ENCODE measurements at regions of chr7 and their contacts with region 1.

Region 1: GRCh38 chr7:100538654-100539435 is at the start of gene AGFG2:
- DNase-seq: peak; percentile 100
- H3K4me3 Mint-ChIP-seq: peak within 1 kb of the TSS; percentile 81
- H3K27ac Mint-ChIP-seq: peak within 1 kb of the TSS; percentile 36
- H3K4me1 Mint-ChIP-seq: peaks cover 28% of the 10 kb centered on the region
- H3K27me3 Mint-ChIP-seq: no peaks in the 10 kb centered on the region
- CTCF ChIP-seq: no peak
- total RNA-seq, gene AGFG2: 8.4 and 11.9 TPM in 2 replicates

Region 2: DNA sequence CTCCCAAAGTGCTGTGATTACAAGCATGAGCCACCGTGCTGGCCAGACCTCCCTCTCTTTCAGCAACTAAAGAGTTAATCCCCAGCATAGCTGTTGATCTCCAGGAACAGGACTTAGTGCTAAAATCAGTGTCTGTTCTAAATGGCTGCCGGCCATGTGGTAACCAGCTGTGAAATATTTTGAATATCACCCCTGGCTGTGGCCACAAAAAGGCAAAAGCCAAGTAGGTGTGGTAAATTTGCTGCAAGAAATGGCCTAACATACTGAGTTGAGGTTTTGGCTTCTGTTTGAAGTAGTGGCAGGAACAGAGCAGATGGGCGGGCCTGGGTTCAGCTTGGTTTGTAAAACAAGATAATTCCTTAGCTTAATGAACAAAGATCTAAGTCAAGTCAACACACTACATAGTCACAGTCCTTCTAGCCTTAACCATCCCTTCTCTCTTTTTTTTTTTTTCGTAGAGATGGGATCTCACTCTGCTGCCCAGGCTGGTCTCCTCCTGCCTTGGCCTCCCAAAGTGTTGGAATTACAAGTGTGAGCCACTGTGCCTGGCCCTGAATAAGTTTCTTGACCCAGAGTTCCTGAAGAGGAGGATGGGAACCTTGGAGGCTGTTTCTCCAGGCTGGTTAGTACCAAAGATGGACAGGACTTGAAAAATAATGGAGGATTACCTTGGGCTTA is 22.6 kb before region 1 on chr7:
- CTCF ChIA-PET with region 1: interaction called, 3 read pairs
- POLR2A ChIA-PET with region 1: interaction called, 14 read pairs
- intact Hi-C with region 1: no loop called
- DNase-seq: peak; percentile 84
- H3K4me3 Mint-ChIP-seq: peak overlapping the region; percentile 45
- H3K27ac Mint-ChIP-seq: peak overlapping the region; percentile 77
- H3K4me1 Mint-ChIP-seq: peaks cover 15% of the 10 kb centered on the region
- H3K27me3 Mint-ChIP-seq: no peaks in the 10 kb centered on the region
- CTCF ChIP-seq: no peak

Region 3: GRCh38 chr7:100612730-100613390 is 74.0 kb after region 1 on chr7:
- CTCF ChIA-PET with region 1: no interaction called
- POLR2A ChIA-PET with region 1: no interaction called
- intact Hi-C with region 1: no loop called
- DNase-seq: no peak
- H3K4me3 Mint-ChIP-seq: peak overlapping the region; percentile 92
- H3K27ac Mint-ChIP-seq: peak overlapping the region; percentile 99
- H3K4me1 Mint-ChIP-seq: peaks cover 6% of the 10 kb centered on the region
- H3K27me3 Mint-ChIP-seq: no peaks in the 10 kb centered on the region
- CTCF ChIP-seq: no peak

Region 4: GRCh38 chr7:100753750-100754149 is 214.9 kb after region 1 on chr7:
- CTCF ChIA-PET with region 1: no interaction called
- POLR2A ChIA-PET with region 1: no interaction called
- intact Hi-C with region 1: no loop called
- DNase-seq: peak; percentile 38
- H3K4me3 Mint-ChIP-seq: no peak overlapping the region
- H3K27ac Mint-ChIP-seq: no peak overlapping the region
- H3K4me1 Mint-ChIP-seq: peaks cover 6% of the 10 kb centered on the region
- H3K27me3 Mint-ChIP-seq: peaks cover 20% of the 10 kb centered on the region
- CTCF ChIP-seq: no peak

Measured in MCF 10A (cell line).